HepG2 (cell line): ENCODE measurements at regions of chrX and their contacts with region 1.

Region 1: GRCh38 chrX:9464435-9465371 is at the start of gene TBL1X:
- DNase-seq: peak; percentile 37
- ATAC-seq: peak; percentile 50
- H3K4me3 ChIP-seq: peak within 1 kb of the TSS; percentile 59 to 74 (median 73); a peak in 5 of 6 replicates
- H3K27ac ChIP-seq: peak within 1 kb of the TSS; percentile 88
- H3K4me1 ChIP-seq: peaks cover 50% of the 10 kb centered on the region
- H3K27me3 ChIP-seq: no peaks in the 10 kb centered on the region
- CTCF ChIP-seq: no peak
- EP300 ChIP-seq: no peak
- POLR2A ChIP-seq: peak in 1 of 2 experiments; percentile 42; a peak in 1 of 4 replicates
- RAD21 ChIP-seq: no peak
- total RNA-seq, gene TBL1X: 17.6 and 23.9 TPM in 2 replicates

Region 2: DNA sequence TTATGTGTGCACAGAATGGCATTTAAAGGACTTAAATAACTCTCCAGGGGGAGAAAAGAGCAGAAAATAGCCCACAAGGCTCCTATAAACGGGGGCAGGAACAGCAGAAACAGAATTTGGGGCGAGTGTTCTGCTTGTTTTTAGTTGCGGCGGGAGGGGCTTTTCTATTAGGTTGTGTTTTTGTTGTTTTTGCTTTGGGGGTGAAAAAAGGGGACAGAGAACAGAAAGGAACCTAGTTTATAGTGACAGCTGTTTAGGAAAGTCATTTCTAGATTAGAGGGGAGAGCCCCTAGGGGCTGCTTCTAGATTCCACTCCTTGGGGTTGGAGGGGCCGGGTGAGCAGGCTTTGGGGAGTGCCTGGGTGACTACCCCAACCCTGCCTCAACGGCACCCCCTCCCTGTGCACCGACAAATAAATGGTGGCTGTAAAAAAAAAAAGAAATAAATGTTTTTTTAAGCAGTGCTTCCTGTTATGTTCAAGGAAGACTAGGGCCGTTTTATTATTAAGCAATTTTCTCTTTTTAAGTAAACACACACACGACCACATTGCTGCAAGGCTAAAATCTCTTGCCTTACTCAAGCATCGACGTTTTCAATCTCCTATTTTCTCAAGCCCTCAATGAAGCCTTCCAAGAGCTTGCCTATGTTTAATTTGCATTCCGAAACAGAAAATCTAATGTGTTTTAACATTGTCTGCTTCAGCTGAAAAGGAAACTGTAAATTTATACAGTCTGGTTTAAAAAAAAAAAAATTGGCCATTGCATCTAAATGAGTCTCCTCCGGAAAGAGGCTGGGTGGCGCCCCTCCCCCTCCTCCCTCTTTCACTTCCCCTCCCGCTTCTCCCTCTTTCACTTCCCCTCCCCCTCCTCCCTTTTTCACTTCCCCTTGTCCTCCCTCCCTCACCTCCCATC is 123.2 kb before region 1 on chrX:
- CTCF ChIA-PET with region 1: no interaction called
- POLR2A ChIA-PET with region 1: interaction called, 5 read pairs
- in situ Hi-C with region 1: loop called (anchors 10 kb)
- intact Hi-C with region 1: loop called (anchors 1 kb)
- DNase-seq: no peak
- ATAC-seq: peak; percentile 45; the same call in 2 of the 3 replicates
- H3K4me3 ChIP-seq: peak overlapping the region in 2 of 3 experiments; percentile 28 to 33; a peak in 4 of 6 replicates
- H3K27ac ChIP-seq: no peak overlapping the region
- H3K4me1 ChIP-seq: peaks cover 20% of the 10 kb centered on the region
- H3K27me3 ChIP-seq: no peaks in the 10 kb centered on the region
- CTCF ChIP-seq: no peak
- EP300 ChIP-seq: no peak
- POLR2A ChIP-seq: no peak
- RAD21 ChIP-seq: no peak

Region 3: DNA sequence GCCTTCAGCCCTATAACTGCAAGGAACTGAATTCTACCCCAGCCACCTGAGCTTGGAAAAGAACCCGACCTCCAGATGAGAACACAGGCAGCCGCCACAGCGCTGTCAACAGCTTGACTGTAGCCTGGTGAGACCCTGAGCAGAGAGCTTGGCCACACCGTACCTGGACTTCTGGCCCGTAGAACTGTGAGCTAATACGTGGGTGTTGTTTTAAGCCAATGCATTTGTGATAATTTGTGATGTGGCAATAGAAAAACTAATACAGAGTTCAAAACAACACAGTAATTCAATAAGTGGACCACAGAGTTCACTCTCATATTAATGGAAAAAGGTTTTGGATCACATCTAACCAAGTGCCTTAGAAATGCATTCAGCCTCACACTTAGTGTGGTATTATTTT is 96.4 kb before region 1 on chrX:
- CTCF ChIA-PET with region 1: no interaction called
- POLR2A ChIA-PET with region 1: interaction called, 3 read pairs
- in situ Hi-C with region 1: no loop called
- intact Hi-C with region 1: loop called (anchors 1 kb)
- DNase-seq: peak; percentile 11
- ATAC-seq: peak; percentile 94
- H3K4me3 ChIP-seq: peak overlapping the region in 2 of 3 experiments; percentile 43 to 49; a peak in 2 of 6 replicates
- H3K27ac ChIP-seq: peak overlapping the region; percentile 70
- H3K4me1 ChIP-seq: peaks cover 34% of the 10 kb centered on the region
- H3K27me3 ChIP-seq: no peaks in the 10 kb centered on the region
- CTCF ChIP-seq: no peak
- EP300 ChIP-seq: no peak
- POLR2A ChIP-seq: no peak
- RAD21 ChIP-seq: no peak

Region 4: GRCh38 chrX:9429781-9430180 is 34.9 kb before region 1 on chrX:
- CTCF ChIA-PET with region 1: no interaction called
- POLR2A ChIA-PET with region 1: no interaction called
- in situ Hi-C with region 1: no loop called
- intact Hi-C with region 1: no loop called
- DNase-seq: no peak
- ATAC-seq: no peak
- H3K4me3 ChIP-seq: no peak overlapping the region
- H3K27ac ChIP-seq: no peak overlapping the region
- H3K4me1 ChIP-seq: no peaks in the 10 kb centered on the region
- H3K27me3 ChIP-seq: no peaks in the 10 kb centered on the region
- CTCF ChIP-seq: no peak
- EP300 ChIP-seq: no peak
- POLR2A ChIP-seq: no peak
- RAD21 ChIP-seq: no peak

Region 5: DNA sequence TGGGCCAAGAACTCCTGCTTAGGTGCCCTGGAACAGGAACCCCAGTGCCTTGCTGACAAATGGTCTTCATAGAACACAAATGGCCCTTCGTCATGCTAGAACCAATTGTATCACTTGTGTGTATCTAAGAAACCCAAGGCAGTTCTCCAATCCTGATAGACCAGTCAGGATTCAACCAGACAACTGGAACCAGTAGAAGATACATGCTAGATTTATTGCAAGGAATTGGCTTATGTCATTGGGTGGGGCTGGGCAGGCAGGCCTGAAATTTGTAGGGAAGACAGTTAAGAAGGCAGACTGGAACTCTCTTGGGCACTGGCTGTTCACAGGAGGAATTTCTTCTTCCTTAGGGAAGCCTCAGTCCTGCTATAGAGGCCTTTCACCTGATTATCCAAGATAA is 16.8 kb before region 1 on chrX:
- CTCF ChIA-PET with region 1: no interaction called
- POLR2A ChIA-PET with region 1: no interaction called
- in situ Hi-C with region 1: no loop called
- intact Hi-C with region 1: no loop called
- DNase-seq: no peak
- ATAC-seq: no peak
- H3K4me3 ChIP-seq: no peak overlapping the region
- H3K27ac ChIP-seq: no peak overlapping the region
- H3K4me1 ChIP-seq: peaks cover 6% of the 10 kb centered on the region; the same call in 1 of the 2 replicates
- H3K27me3 ChIP-seq: no peaks in the 10 kb centered on the region
- CTCF ChIP-seq: no peak
- EP300 ChIP-seq: no peak
- POLR2A ChIP-seq: no peak
- RAD21 ChIP-seq: no peak

Region 6: GRCh38 chrX:9482408-9482807 is 17.7 kb after region 1 on chrX:
- CTCF ChIA-PET with region 1: no interaction called
- POLR2A ChIA-PET with region 1: interaction called, 10 read pairs
- in situ Hi-C with region 1: no loop called
- intact Hi-C with region 1: no loop called
- DNase-seq: no peak
- ATAC-seq: peak; percentile 71
- H3K4me3 ChIP-seq: no peak overlapping the region
- H3K27ac ChIP-seq: peak overlapping the region; percentile 60
- H3K4me1 ChIP-seq: peaks cover 74% of the 10 kb centered on the region
- H3K27me3 ChIP-seq: no peaks in the 10 kb centered on the region
- CTCF ChIP-seq: 0 out of 2 replicates have a peak, but pooled peaks have one; percentile 14
- EP300 ChIP-seq: no peak
- POLR2A ChIP-seq: no peak
- RAD21 ChIP-seq: no peak

Region 7: DNA sequence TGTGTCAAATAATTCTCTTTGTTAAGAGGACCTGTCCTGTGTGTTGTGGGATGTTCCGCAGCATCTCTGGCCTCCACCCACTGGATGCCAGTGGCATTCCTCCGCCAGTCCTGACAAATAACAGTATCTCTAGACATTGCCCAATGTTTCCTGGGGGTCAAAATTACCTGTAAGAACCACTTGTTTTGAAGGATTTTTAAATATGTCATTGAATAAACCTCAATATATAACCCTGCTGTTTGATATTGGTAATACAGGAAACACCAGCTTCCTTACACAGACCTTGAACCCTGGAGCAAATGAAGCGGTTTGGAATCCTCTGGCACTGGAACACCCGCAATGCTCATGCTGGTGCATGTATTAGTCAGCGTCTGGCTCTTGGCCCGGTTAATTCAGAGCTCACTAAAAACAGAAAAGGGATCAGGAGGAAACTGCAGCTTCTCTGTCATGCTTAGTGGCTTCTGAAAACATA is 101.5 kb after region 1 on chrX:
- CTCF ChIA-PET with region 1: no interaction called
- POLR2A ChIA-PET with region 1: no interaction called
- in situ Hi-C with region 1: no loop called
- intact Hi-C with region 1: loop called (anchors 10 kb)
- DNase-seq: peak; percentile 65
- ATAC-seq: peak; percentile 91
- H3K4me3 ChIP-seq: no peak overlapping the region
- H3K27ac ChIP-seq: peak overlapping the region; percentile 43
- H3K4me1 ChIP-seq: peaks cover 29% of the 10 kb centered on the region
- H3K27me3 ChIP-seq: no peaks in the 10 kb centered on the region
- CTCF ChIP-seq: no peak
- EP300 ChIP-seq: no peak
- POLR2A ChIP-seq: no peak
- RAD21 ChIP-seq: no peak

Region 8: DNA sequence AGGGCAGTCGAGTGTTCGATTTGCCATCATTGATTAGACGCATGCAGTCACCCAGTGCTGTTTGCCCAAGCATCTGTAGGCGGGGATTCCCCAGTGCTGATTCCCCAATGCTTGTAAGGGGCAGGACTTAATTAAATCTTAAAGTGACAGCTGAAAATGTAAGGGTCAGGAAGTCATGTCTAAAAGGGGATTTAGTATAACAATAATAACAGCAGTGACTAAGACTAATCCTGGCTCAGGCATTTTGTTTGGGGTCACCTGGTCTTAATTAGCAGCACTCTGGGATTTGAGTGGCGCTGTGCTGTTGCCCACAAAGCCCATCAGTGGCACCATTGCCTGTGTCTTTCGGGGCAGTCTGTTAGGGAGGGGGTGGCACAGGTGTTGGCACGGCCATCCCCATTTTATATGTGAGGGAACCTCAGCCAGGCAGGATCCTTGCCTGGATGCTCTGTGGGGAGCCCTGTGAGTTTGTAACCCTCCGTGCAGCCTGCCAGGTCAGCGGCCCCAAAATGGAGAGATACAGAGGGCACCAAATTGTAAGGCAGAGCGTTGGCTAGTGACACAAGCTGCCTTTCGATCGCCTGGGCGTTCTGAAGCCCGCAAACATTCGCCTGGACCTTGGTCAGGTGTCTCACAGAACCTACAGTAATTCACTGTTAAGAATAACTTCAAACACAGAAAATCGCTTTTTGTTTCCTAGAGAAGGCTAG is 146.9 kb after region 1 on chrX:
- CTCF ChIA-PET with region 1: no interaction called
- POLR2A ChIA-PET with region 1: no interaction called
- in situ Hi-C with region 1: no loop called
- intact Hi-C with region 1: loop called (anchors 10 kb)
- DNase-seq: peak; percentile 15
- ATAC-seq: peak; percentile 95
- H3K4me3 ChIP-seq: no peak overlapping the region; a peak in 1 of 6 replicates
- H3K27ac ChIP-seq: peak overlapping the region; percentile 44
- H3K4me1 ChIP-seq: peaks cover 36% of the 10 kb centered on the region
- H3K27me3 ChIP-seq: no peaks in the 10 kb centered on the region
- CTCF ChIP-seq: no peak
- EP300 ChIP-seq: no peak
- POLR2A ChIP-seq: no peak
- RAD21 ChIP-seq: no peak

Region 9: GRCh38 chrX:9708904-9709553 is 244.3 kb after region 1 on chrX:
- CTCF ChIA-PET with region 1: no interaction called
- POLR2A ChIA-PET with region 1: no interaction called
- in situ Hi-C with region 1: no loop called
- intact Hi-C with region 1: loop called (anchors 5 kb)
- DNase-seq: peak; percentile 21
- ATAC-seq: peak; percentile 86
- H3K4me3 ChIP-seq: no peak overlapping the region
- H3K27ac ChIP-seq: no peak overlapping the region
- H3K4me1 ChIP-seq: no peaks in the 10 kb centered on the region
- H3K27me3 ChIP-seq: no peaks in the 10 kb centered on the region
- CTCF ChIP-seq: peak; percentile 75
- EP300 ChIP-seq: no peak
- POLR2A ChIP-seq: no peak
- RAD21 ChIP-seq: peak; percentile 46; the same call in 1 of the 2 replicates

Region 10: GRCh38 chrX:9758021-9758638 is 293.4 kb after region 1 on chrX:
- CTCF ChIA-PET with region 1: no interaction called
- POLR2A ChIA-PET with region 1: no interaction called
- in situ Hi-C with region 1: no loop called
- intact Hi-C with region 1: no loop called
- DNase-seq: no peak
- ATAC-seq: no peak
- H3K4me3 ChIP-seq: no peak overlapping the region
- H3K27ac ChIP-seq: no peak overlapping the region
- H3K4me1 ChIP-seq: no peaks in the 10 kb centered on the region
- H3K27me3 ChIP-seq: no peaks in the 10 kb centered on the region
- CTCF ChIP-seq: no peak
- EP300 ChIP-seq: no peak
- POLR2A ChIP-seq: no peak
- RAD21 ChIP-seq: no peak